ENCODE measurements at regions of chr10 and their contacts with region 1.

Region 1: GRCh38 chr10:7525314-7526016 is 114.6 kb upstream of the SFMBT2 start:
- DNase-seq: peak; percentile 27 to 85 (median 59)
- ATAC-seq: peak; percentile 80
- H3K4me3 ChIP-seq: no peak overlapping the region
- H3K4me3 Mint-ChIP-seq: no peak overlapping the region
- H3K27ac ChIP-seq: no peak overlapping the region
- H3K27ac Mint-ChIP-seq: no peak overlapping the region
- H3K4me1 ChIP-seq: peaks cover 7% of the 10 kb centered on the region
- H3K4me1 Mint-ChIP-seq: peaks cover 22% of the 10 kb centered on the region
- H3K27me3 ChIP-seq: no peaks in the 10 kb centered on the region
- H3K27me3 Mint-ChIP-seq: no peaks in the 10 kb centered on the region
- CTCF ChIP-seq: peak; percentile 85

Region 2: GRCh38 chr10:7424315-7424714 is 101.2 kb before region 1 on chr10:
- CTCF ChIA-PET with region 1: interaction called, 28 read pairs
- POLR2A ChIA-PET with region 1: no interaction called
- intact Hi-C with region 1: loop called in 1 of 2 experiments (anchors 1 kb)
- DNase-seq: peak in 6 of 9 experiments; percentile 26 to 70 (median 58)
- ATAC-seq: peak; percentile 91
- H3K4me3 ChIP-seq: no peak overlapping the region
- H3K4me3 Mint-ChIP-seq: no peak overlapping the region
- H3K27ac ChIP-seq: no peak overlapping the region
- H3K27ac Mint-ChIP-seq: peak overlapping the region; percentile 49
- H3K4me1 ChIP-seq: no peaks in the 10 kb centered on the region
- H3K4me1 Mint-ChIP-seq: peaks cover 24% of the 10 kb centered on the region
- H3K27me3 ChIP-seq: no peaks in the 10 kb centered on the region
- H3K27me3 Mint-ChIP-seq: no peaks in the 10 kb centered on the region
- CTCF ChIP-seq: no peak

Region 3: DNA sequence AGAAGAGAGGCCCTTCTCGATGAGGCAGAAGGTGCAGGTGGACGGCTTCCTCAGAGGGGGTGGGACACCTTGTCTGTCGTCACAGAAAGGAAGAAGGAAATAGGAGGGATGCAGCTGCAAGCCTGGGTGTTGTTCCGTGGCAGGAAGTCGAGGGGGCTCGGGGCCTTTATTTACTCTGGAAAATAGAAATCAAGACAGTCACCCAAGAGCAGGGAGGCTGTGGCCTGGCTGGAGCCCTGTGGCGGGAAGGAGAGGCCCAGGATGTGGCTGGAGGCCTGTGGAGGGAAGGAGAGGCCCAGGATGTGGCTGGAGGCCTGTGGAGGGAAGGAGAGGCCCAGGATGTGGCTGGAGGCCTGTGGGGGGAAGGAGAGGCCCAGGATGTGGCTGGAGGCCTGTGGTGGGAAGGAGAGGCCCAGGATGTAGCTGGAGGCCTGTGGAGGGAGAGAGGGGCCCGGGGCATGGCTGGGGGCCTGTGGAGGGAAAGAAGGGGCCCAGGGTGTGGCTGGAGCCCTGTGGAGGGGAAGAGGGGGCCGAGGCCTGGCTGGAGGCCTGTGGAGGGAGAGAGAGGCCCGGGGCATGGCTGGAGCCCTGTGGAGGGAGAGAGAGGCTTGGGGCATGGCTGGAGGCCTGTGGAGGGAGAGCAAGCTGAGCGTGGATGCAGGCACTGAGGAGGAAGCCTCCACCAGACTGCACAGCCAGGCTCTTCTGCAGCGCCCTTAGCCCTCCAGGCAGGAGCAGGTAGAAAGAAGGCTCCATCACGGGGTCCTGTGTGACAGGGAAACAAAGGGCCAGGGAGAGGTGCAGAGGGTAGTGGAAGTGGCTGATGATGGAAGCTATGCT is 17.4 kb before region 1 on chr10:
- CTCF ChIA-PET with region 1: interaction called, 13 read pairs
- POLR2A ChIA-PET with region 1: no interaction called
- intact Hi-C with region 1: no loop called
- DNase-seq: peak in 5 of 9 experiments; percentile 23 to 75 (median 55)
- ATAC-seq: peak; percentile 52
- H3K4me3 ChIP-seq: no peak overlapping the region
- H3K4me3 Mint-ChIP-seq: peak overlapping the region; percentile 42
- H3K27ac ChIP-seq: peak overlapping the region; percentile 29 to 73
- H3K27ac Mint-ChIP-seq: peak overlapping the region; percentile 86
- H3K4me1 ChIP-seq: peaks cover 26% of the 10 kb centered on the region
- H3K4me1 Mint-ChIP-seq: peaks cover 58% of the 10 kb centered on the region
- H3K27me3 ChIP-seq: no peaks in the 10 kb centered on the region
- H3K27me3 Mint-ChIP-seq: no peaks in the 10 kb centered on the region
- CTCF ChIP-seq: no peak

Region 4: DNA sequence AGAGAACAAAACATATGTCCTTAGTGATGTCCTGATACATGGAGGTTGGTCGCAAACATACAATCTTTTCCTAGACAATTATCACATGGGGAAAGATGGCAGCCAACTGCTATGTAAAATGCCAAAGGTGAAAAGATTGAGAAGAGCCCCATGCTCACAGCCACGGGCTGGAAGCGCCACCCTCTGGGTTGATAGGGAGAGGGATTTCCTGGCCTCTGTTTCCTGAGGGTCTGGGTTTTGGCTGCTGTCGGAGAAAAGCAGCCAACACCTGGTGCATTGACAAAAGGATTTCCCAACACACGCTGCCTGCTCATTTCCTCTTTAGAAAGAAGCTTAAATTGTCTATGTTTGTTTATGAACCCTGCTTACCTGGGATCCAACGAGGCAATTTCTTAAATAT is 97.5 kb after region 1 on chr10:
- CTCF ChIA-PET with region 1: interaction called, 6 read pairs
- POLR2A ChIA-PET with region 1: no interaction called
- intact Hi-C with region 1: loop called in 1 of 2 experiments (anchors 1 kb)
- DNase-seq: peak in 1 of 9 experiments; percentile 12
- ATAC-seq: no peak
- H3K4me3 ChIP-seq: no peak overlapping the region
- H3K4me3 Mint-ChIP-seq: no peak overlapping the region
- H3K27ac ChIP-seq: no peak overlapping the region
- H3K27ac Mint-ChIP-seq: no peak overlapping the region
- H3K4me1 ChIP-seq: no peaks in the 10 kb centered on the region
- H3K4me1 Mint-ChIP-seq: no peaks in the 10 kb centered on the region
- H3K27me3 ChIP-seq: no peaks in the 10 kb centered on the region
- H3K27me3 Mint-ChIP-seq: no peaks in the 10 kb centered on the region
- CTCF ChIP-seq: no peak

Region 5: DNA sequence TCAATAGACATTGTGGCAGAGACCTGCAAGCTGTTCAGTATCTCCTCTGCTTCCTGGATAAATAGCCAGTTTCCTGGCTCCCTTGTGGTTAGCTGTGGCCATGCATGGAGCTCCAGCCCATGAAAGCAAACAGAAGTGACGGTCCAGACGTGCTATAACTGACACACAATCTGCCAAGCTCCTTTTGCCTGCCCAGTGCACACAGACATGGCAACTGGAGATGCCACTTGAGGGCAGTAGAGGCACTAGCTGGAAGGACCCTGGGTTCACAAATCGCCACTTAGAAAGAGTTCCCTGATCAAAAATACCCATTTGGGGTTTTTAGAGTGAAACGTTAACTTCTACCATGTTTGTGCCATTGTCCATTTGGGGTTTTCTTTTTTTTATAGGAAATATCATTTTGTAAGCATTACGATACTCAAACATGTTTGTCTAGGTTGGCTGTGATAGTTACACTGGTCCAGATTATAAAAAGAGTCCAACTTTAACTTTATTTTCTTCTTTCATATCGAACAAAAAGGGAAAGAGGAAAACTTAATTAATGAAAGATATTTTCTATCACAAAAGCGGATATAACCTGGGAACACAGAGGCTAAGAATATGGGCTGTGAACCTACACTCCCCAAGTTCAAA is 231.0 kb after region 1 on chr10:
- CTCF ChIA-PET with region 1: interaction called, 3 read pairs
- POLR2A ChIA-PET with region 1: no interaction called
- intact Hi-C with region 1: loop called (anchors 2 to 5 kb)
- DNase-seq: peak in 5 of 9 experiments; percentile 2 to 44 (median 31)
- ATAC-seq: no peak
- H3K4me3 ChIP-seq: no peak overlapping the region
- H3K4me3 Mint-ChIP-seq: no peak overlapping the region
- H3K27ac ChIP-seq: no peak overlapping the region
- H3K27ac Mint-ChIP-seq: no peak overlapping the region
- H3K4me1 ChIP-seq: no peaks in the 10 kb centered on the region
- H3K4me1 Mint-ChIP-seq: no peaks in the 10 kb centered on the region
- H3K27me3 ChIP-seq: no peaks in the 10 kb centered on the region
- H3K27me3 Mint-ChIP-seq: no peaks in the 10 kb centered on the region
- CTCF ChIP-seq: no peak

Region 6: DNA sequence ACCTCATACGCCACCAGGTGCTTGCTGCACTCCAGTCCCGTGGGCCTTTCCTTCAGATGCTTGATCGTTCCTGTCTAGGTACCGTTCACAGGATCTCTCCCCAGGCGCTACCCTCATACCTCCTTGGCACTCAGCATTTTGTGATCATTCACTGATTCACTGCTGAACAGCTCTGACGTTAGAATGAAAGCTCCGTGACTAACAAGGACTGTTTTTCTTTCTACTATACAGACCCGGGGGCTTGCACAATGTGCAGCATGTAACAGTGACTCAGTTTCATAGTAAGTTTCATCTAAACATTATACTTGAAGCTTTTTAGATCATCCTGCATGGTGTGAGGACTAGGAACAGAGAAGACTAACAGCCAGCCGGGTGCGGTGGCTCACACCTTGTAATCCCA is 241.7 kb after region 1 on chr10:
- CTCF ChIA-PET with region 1: no interaction called
- POLR2A ChIA-PET with region 1: no interaction called
- intact Hi-C with region 1: no loop called
- DNase-seq: no peak
- ATAC-seq: no peak
- H3K4me3 ChIP-seq: no peak overlapping the region
- H3K4me3 Mint-ChIP-seq: no peak overlapping the region
- H3K27ac ChIP-seq: no peak overlapping the region
- H3K27ac Mint-ChIP-seq: no peak overlapping the region
- H3K4me1 ChIP-seq: no peaks in the 10 kb centered on the region
- H3K4me1 Mint-ChIP-seq: no peaks in the 10 kb centered on the region
- H3K27me3 ChIP-seq: no peaks in the 10 kb centered on the region
- H3K27me3 Mint-ChIP-seq: no peaks in the 10 kb centered on the region
- CTCF ChIP-seq: no peak

Region 7: DNA sequence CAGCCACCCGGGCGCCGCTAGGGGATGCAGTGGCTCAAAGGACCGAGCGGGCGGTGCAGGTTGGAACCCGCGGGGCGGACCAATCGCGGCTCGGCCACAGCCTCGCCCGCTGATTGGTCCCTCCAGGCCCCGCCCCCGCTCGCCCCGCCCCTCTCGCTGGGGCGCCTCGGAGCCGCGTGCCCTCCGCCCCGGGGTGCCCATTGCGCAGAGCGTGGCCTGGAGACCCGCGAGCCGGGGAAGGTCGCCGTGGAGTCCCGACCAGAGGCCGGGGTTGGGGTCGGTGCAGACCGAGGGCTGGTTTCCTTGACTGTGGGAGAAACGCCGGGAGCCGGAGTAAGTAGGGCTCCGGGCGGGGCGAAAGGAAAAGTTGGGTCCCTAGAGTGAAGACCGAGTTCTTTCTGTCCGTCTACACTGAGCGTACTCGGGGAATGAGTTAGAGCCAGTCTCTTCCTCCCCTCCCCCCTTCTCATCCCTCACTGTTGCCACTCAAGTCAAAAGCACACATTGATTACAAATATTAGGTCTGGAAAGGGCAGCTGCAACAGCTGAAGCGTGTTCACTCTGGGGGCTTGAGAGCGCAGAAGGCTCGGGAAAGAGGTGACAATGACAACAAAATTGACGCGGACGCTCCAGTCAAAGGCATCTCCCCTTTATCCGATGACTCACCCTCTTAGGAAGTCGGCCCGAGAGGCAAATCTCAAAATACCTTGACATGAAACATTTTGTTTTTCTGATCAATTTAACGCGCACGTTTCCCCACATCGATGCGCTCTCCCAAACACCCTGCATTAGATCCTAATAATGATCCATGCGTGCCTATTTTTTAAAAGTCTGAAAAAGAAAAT is 528.2 kb after region 1 on chr10:
- CTCF ChIA-PET with region 1: no interaction called
- POLR2A ChIA-PET with region 1: no interaction called
- intact Hi-C with region 1: loop called in 1 of 2 experiments (anchors 5 kb)
- DNase-seq: peak; percentile 85 to 97 (median 95)
- ATAC-seq: peak; percentile 60
- H3K4me3 ChIP-seq: peak overlapping the region; percentile 87 to 90
- H3K4me3 Mint-ChIP-seq: peak overlapping the region; percentile 83
- H3K27ac ChIP-seq: peak overlapping the region; percentile 56 to 65
- H3K27ac Mint-ChIP-seq: peak overlapping the region; percentile 92
- H3K4me1 ChIP-seq: peaks cover 65% of the 10 kb centered on the region
- H3K4me1 Mint-ChIP-seq: peaks cover 49% of the 10 kb centered on the region
- H3K27me3 ChIP-seq: peaks cover 35 to 39% of the 10 kb centered on the region in 2 experiments
- H3K27me3 Mint-ChIP-seq: peaks cover 23% of the 10 kb centered on the region
- CTCF ChIP-seq: no peak

Region 8: DNA sequence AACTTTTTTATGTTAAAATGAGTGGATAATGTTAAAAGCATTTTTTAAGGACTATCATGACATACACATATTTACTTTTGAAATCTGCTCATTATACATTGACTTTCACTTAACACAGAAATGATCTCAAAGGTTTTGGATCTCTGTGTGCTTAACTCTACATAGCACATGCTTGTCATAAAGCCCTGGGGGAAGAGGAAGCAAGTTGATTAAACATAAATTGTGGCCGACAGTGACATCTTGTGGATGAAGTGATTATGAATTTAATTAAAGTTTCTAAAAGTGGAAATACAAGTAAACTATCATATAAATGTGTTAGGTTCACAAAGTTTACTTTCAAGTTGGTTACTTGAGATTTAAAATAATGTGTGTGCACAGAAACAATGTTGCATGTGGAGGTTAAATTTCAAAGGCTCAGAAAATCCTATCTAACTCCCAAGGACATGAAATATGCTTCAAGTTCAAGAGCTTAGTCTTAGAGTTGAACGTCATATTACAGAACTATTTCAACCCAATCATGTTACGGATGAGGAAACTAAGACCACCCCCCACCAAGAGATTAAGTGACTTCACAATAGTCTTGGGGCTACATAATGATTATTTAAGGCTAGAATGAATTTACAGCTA is 1776.8 kb after region 1 on chr10:
- CTCF ChIA-PET with region 1: interaction called, 16 read pairs
- POLR2A ChIA-PET with region 1: no interaction called
- intact Hi-C with region 1: loop called (anchors 1 kb)
- DNase-seq: peak in 3 of 9 experiments; percentile 19 to 63 (median 51)
- ATAC-seq: peak; percentile 44
- H3K4me3 ChIP-seq: no peak overlapping the region
- H3K4me3 Mint-ChIP-seq: no peak overlapping the region
- H3K27ac ChIP-seq: no peak overlapping the region
- H3K27ac Mint-ChIP-seq: no peak overlapping the region
- H3K4me1 ChIP-seq: no peaks in the 10 kb centered on the region
- H3K4me1 Mint-ChIP-seq: no peaks in the 10 kb centered on the region
- H3K27me3 ChIP-seq: no peaks in the 10 kb centered on the region
- H3K27me3 Mint-ChIP-seq: peaks cover 11% of the 10 kb centered on the region
- CTCF ChIP-seq: peak; percentile 59